ENCODE measurements at regions of chr1 and their contacts with region 1.

Region 1: DNA sequence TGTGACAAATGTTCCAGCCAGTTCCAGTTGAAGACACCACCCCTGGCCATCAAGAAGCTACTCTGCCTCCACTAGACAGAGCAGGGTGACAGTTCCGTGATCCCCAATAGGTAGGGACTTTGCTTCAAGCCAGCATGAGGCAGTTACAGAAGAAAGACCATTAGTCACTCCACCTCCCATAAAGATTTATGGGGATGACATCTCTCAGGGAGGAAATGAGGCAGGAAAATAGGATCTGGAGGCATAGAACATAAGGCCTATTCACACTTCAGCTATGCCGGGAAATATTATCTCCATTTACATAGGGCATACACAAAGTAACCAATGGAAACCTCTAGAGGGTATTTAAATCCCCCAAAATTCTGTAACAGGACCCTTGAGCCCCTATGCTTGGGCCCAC is 3.5 kb upstream of the GBP7 start:
- DNase-seq: no peak
- ATAC-seq: no peak
- H3K4me3 ChIP-seq: no peak overlapping the region
- H3K27ac ChIP-seq: no peak overlapping the region
- H3K4me1 ChIP-seq: no peaks in the 10 kb centered on the region
- H3K27me3 ChIP-seq: no peaks in the 10 kb centered on the region
- CTCF ChIP-seq: no peak
- POLR2A ChIP-seq: no peak

Region 2: GRCh38 chr1:88983791-88984559 is 195.4 kb before region 1 on chr1:
- in situ Hi-C with region 1: no loop called
- intact Hi-C with region 1: no loop called
- DNase-seq: no peak
- ATAC-seq: peak; percentile 60 to 74
- H3K4me3 ChIP-seq: peak overlapping the region in 1 of 4 donors; percentile 4
- H3K27ac ChIP-seq: peak overlapping the region; percentile 7 to 50 (median 42)
- H3K4me1 ChIP-seq: peaks cover 12 to 27% of the 10 kb centered on the region in 2 donors
- H3K27me3 ChIP-seq: no peaks in the 10 kb centered on the region
- CTCF ChIP-seq: peak; percentile 35 to 58 (median 47)
- POLR2A ChIP-seq: no peak

Region 3: GRCh38 chr1:89142160-89142559 is 37.2 kb before region 1 on chr1:
- in situ Hi-C with region 1: no loop called
- intact Hi-C with region 1: no loop called
- DNase-seq: no peak
- ATAC-seq: no peak
- H3K4me3 ChIP-seq: no peak overlapping the region
- H3K27ac ChIP-seq: no peak overlapping the region
- H3K4me1 ChIP-seq: no peaks in the 10 kb centered on the region
- H3K27me3 ChIP-seq: no peaks in the 10 kb centered on the region
- CTCF ChIP-seq: no peak
- POLR2A ChIP-seq: no peak

Region 4: GRCh38 chr1:89347296-89347695 is 168.0 kb after region 1 on chr1:
- in situ Hi-C with region 1: no loop called
- intact Hi-C with region 1: loop called (anchors 10 kb)
- DNase-seq: no peak
- ATAC-seq: no peak
- H3K4me3 ChIP-seq: no peak overlapping the region
- H3K27ac ChIP-seq: no peak overlapping the region
- H3K4me1 ChIP-seq: no peaks in the 10 kb centered on the region
- H3K27me3 ChIP-seq: no peaks in the 10 kb centered on the region
- CTCF ChIP-seq: no peak
- POLR2A ChIP-seq: no peak